Heart left ventricle (tissue), 16 donors: ENCODE measurements at regions of chr11 and their contacts with region 1.

Region 1: GRCh38 chr11:64304316-64305072 is 830 bp upstream of the ESRRA start:
- DNase-seq: peak; percentile 91 to 96 (median 94)
- ATAC-seq: peak; percentile 38 to 67 (median 54)
- H3K4me3 ChIP-seq: peak overlapping the region; percentile 23 to 93 (median 76)
- H3K27ac ChIP-seq: peak overlapping the region; percentile 90 to 98 (median 97)
- H3K4me1 ChIP-seq: peaks cover 2 to 47% (median 33%) of the 10 kb centered on the region in 12 donors
- H3K27me3 ChIP-seq: peaks cover 0 to 17% (median 6%) of the 10 kb centered on the region in 9 donors
- CTCF ChIP-seq: peak; percentile 81 to 94 (median 89)
- POLR2A ChIP-seq: no peak

Region 2: GRCh38 chr11:63974259-63975143 is 330.0 kb before region 1 on chr11 and contains the start of gene COX8A:
- intact Hi-C with region 1: loop called in 1 of 10 experiments (anchors 10 kb)
- DNase-seq: peak; percentile 96 to 99 (median 98)
- ATAC-seq: peak; percentile 96 to 97 (median 96)
- H3K4me3 ChIP-seq: peak within 1 kb of the TSS; percentile 67 to 95 (median 79)
- H3K27ac ChIP-seq: peak within 1 kb of the TSS; percentile 85 to 99 (median 98)
- H3K4me1 ChIP-seq: peaks cover 3 to 41% (median 20%) of the 10 kb centered on the region in 12 donors
- H3K27me3 ChIP-seq: no peaks in the 10 kb centered on the region
- CTCF ChIP-seq: peak in 5 of 12 donors; percentile 12 to 43 (median 36)
- POLR2A ChIP-seq: peak in 1 of 2 donors; percentile 69
- total RNA-seq, gene COX8A: 673 to 1,925 (median 988) TPM

Region 3: DNA sequence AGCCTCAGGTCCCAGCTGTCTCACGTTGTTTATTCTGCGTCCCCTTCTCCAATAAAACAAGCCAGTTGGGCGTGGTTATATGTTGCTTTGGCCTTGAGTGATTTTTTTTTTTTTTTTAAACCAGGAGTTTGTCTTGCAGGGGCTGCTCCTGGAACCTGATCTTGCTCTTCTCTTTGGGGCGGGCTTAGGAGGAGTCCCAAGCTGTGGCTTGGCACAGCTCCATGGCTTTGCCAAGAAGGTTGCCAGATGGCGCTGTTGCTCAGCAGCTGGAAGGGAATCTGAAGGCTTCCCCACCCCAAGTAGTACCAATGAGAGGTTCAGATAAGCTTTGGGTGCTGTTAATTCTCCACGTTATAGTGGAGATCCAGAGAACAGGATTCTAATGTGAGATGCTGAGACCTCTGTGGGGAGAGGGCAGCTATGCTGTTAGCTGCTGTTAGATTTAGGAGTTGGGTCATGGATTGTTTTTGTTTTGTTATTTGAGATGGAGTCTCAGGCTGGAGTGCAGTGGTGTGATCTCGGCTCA is 100.0 kb before region 1 on chr11:
- intact Hi-C with region 1: loop called (anchors 1 to 5 kb)
- DNase-seq: peak; percentile 83 to 91 (median 85)
- ATAC-seq: peak; percentile 48 to 65 (median 57)
- H3K4me3 ChIP-seq: no peak overlapping the region
- H3K27ac ChIP-seq: peak overlapping the region in 2 of 12 donors; percentile 44 to 98
- H3K4me1 ChIP-seq: peaks cover 0 to 47% (median 27%) of the 10 kb centered on the region in 12 donors
- H3K27me3 ChIP-seq: no peaks in the 10 kb centered on the region
- CTCF ChIP-seq: peak; percentile 55 to 84 (median 68)
- POLR2A ChIP-seq: no peak

Region 4: GRCh38 chr11:64246871-64247728 is 57.4 kb before region 1 on chr11 and contains the start of gene PPP1R14B:
- intact Hi-C with region 1: loop called in 5 of 10 experiments (anchors 2 to 10 kb)
- DNase-seq: peak; percentile 90 to 94 (median 93)
- ATAC-seq: peak; percentile 58 to 74 (median 68)
- H3K4me3 ChIP-seq: peak within 1 kb of the TSS; percentile 56 to 90 (median 72)
- H3K27ac ChIP-seq: peak within 1 kb of the TSS; percentile 49 to 96 (median 92)
- H3K4me1 ChIP-seq: peaks cover 5 to 65% (median 37%) of the 10 kb centered on the region in 12 donors
- H3K27me3 ChIP-seq: no peaks in the 10 kb centered on the region
- CTCF ChIP-seq: peak in 7 of 12 donors; percentile 8 to 31 (median 18)
- POLR2A ChIP-seq: peak in 1 of 2 donors; percentile 50
- total RNA-seq, gene PPP1R14B: 69.6 to 244 (median 90.4) TPM

Region 5: GRCh38 chr11:64284048-64284961 is 20.2 kb before region 1 on chr11 and contains the start of gene BAD:
- intact Hi-C with region 1: loop called in 1 of 10 experiments (anchors 1 kb)
- DNase-seq: peak; percentile 96 to 97 (median 96)
- ATAC-seq: peak; percentile 92 to 97 (median 93)
- H3K4me3 ChIP-seq: peak within 1 kb of the TSS; percentile 40 to 96 (median 78)
- H3K27ac ChIP-seq: peak within 1 kb of the TSS; percentile 94 to 99 (median 98)
- H3K4me1 ChIP-seq: peaks cover 4 to 47% (median 24%) of the 10 kb centered on the region in 12 donors
- H3K27me3 ChIP-seq: no peaks in the 10 kb centered on the region
- CTCF ChIP-seq: no peak
- POLR2A ChIP-seq: peak in 1 of 2 donors; percentile 72
- total RNA-seq, gene BAD: 41.5 to 123 (median 49.9) TPM